Pancreas (tissue), 10 donors: ENCODE measurements at regions of chr5 and their contacts with region 1.

Region 1: DNA sequence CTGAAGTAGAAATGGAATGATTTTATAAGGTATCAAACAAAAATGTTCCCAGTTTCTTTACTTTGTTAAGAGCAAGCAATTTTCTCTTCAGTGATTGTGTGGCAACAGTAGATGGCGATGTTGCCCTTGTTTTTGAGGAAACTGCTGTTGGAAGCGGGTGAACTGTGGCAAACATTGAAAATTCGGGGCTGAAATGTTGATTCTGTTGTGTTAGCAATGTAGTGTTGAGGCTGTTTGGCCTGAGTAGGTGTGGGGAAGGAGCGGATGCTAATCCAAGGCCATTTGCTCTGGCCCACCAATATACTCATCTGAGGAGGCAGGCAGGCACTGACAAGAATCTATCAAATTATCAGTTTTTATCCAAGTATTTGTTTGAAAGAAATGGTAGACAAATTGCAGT is 129.8 kb downstream of the SLC12A2 start:
- DNase-seq: peak in 2 of 6 donors; percentile 16 to 60
- ATAC-seq: peak; percentile 53 to 80 (median 78)
- H3K4me3 ChIP-seq: no peak overlapping the region
- H3K27ac ChIP-seq: no peak overlapping the region
- H3K4me1 ChIP-seq: no peaks in the 10 kb centered on the region
- H3K27me3 ChIP-seq: no peaks in the 10 kb centered on the region
- CTCF ChIP-seq: peak in 3 of 4 donors; percentile 48 to 59 (median 50)

Region 2: DNA sequence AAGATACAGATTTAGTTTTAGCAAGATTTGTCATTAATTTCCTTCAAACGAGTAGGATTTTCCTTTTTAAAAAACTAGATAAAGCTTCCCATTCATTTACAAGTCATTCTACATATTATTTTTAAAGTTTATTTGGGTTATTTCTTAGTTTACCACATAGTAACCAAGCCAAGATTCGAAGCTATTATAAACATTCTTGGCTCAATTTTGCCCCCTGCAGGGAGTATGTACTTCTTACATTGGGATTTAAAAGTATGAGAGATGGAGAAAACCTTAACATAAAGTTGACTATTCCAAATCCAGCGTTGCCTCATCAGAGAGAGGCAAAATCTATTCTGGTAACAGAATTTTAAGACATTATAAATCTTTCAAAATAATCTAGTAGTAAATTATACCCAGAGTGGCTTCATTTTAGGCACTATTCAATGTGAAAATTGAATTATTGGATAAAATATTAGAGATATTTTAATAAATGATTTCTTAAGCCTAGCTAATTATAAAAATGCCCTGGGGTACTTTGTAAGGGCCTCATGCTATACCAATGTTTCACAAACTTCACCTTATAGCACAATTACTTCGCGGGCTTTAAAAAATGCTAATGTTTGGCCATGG is 285.6 kb after region 1 on chr5:
- intact Hi-C with region 1: loop called in 2 of 3 experiments (anchors 5 to 10 kb)
- DNase-seq: no peak
- ATAC-seq: peak in 2 of 4 donors; percentile 56 to 72
- H3K4me3 ChIP-seq: no peak overlapping the region
- H3K27ac ChIP-seq: no peak overlapping the region
- H3K4me1 ChIP-seq: no peaks in the 10 kb centered on the region
- H3K27me3 ChIP-seq: no peaks in the 10 kb centered on the region
- CTCF ChIP-seq: peak in 2 of 4 donors; percentile 23 to 27